ENCODE measurements at regions of chr2 and their contacts with region 1.

Region 1: GRCh38 chr2:156319811-156320485 is 12.6 kb downstream of the NR4A2 start:
- DNase-seq: peak; percentile 88 to 90
- H3K4me3 ChIP-seq: peak overlapping the region; percentile 14 to 47 (median 28)
- H3K27ac ChIP-seq: peak overlapping the region; percentile 82 to 89 (median 87)
- H3K4me1 ChIP-seq: no peaks in the 10 kb centered on the region
- H3K27me3 ChIP-seq: no peaks in the 10 kb centered on the region
- CTCF ChIP-seq: peak in 5 of 6 experiments; percentile 15 to 62 (median 44)
- POLR2A ChIP-seq: peak in 1 of 2 donors; percentile 68

Region 2: DNA sequence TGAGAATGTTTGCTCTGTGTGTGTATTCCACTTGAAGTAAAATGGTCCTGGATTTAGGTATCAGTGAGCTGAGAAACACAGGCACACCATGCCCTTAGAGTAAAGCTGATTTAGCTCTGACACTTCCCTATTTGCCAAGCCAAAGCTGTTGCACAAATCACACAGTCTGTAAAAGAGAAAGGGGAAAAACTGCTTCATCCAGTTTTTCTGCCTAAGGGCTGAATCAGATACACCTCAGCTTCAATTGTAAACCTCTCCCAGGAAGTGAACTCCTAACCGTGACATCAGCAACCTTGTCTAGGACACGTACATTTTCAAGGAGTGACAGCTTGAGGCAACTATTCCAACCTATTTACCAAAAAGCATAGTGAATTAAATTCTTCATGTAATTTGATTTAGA is 137.8 kb before region 1 on chr2:
- intact Hi-C with region 1: loop called (anchors 10 kb)
- DNase-seq: peak; percentile 35 to 42
- H3K4me3 ChIP-seq: no peak overlapping the region
- H3K27ac ChIP-seq: peak overlapping the region; percentile 71 to 86 (median 83)
- H3K4me1 ChIP-seq: peaks cover 3 to 7% of the 10 kb centered on the region in 2 donors
- H3K27me3 ChIP-seq: no peaks in the 10 kb centered on the region
- CTCF ChIP-seq: no peak
- POLR2A ChIP-seq: peak in 1 of 2 donors; percentile 15

Region 3: GRCh38 chr2:156242874-156243273 is 77.1 kb before region 1 on chr2:
- intact Hi-C with region 1: no loop called
- DNase-seq: no peak
- H3K4me3 ChIP-seq: no peak overlapping the region
- H3K27ac ChIP-seq: no peak overlapping the region
- H3K4me1 ChIP-seq: no peaks in the 10 kb centered on the region
- H3K27me3 ChIP-seq: no peaks in the 10 kb centered on the region
- CTCF ChIP-seq: no peak
- POLR2A ChIP-seq: no peak

Measured in thyroid gland (tissue), 4 donors.